Cardiac septum (tissue), 1 donor: ENCODE measurements at regions of chr16 and their contacts with region 1.

Region 1: GRCh38 chr16:52912565-52913173 is 140.0 kb downstream of the CHD9NB start:
- DNase-seq: no peak

Region 2: GRCh38 chr16:52191531-52192134 is 721.0 kb before region 1 on chr16:
- intact Hi-C with region 1: loop called (anchors 5 kb)
- DNase-seq: no peak